AG04449 (cell line): ENCODE measurements at regions of chr16 and their contacts with region 1.

Region 1: DNA sequence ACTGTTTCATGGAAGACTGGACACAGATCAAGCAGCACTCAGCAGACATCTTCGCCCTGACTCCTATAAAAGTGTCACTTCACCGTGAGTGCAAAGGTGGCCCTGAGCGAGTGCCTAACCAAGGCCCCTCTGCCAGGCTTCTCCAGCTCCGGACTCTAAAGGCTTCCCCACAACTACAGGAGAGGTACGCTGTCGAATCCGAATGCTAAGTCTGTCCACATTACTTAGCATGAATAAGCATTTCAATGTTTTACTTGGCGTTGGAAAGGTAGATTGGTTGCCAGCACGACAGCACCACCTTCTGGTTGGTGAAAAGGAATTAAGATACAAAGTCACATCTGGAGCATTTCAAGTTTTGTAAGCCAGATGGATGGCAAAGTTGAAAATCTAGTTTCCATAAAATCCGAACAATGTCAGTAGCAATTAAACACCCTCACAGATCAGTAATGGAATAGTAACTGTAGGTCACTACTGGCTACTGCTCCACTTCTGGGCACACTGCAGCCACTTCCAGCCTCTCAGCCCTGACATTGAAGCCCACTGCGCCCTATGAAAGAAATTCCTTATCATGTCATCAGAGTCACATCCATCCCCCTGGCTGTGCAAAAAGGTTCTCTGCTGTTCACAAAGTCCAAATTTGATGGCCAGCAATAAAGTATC is 100.9 kb downstream of the PARN start:
- DNase-seq: peak; percentile 76
- H3K4me3 ChIP-seq: peak overlapping the region; percentile 32
- CTCF ChIP-seq: peak; percentile 43

Region 2: DNA sequence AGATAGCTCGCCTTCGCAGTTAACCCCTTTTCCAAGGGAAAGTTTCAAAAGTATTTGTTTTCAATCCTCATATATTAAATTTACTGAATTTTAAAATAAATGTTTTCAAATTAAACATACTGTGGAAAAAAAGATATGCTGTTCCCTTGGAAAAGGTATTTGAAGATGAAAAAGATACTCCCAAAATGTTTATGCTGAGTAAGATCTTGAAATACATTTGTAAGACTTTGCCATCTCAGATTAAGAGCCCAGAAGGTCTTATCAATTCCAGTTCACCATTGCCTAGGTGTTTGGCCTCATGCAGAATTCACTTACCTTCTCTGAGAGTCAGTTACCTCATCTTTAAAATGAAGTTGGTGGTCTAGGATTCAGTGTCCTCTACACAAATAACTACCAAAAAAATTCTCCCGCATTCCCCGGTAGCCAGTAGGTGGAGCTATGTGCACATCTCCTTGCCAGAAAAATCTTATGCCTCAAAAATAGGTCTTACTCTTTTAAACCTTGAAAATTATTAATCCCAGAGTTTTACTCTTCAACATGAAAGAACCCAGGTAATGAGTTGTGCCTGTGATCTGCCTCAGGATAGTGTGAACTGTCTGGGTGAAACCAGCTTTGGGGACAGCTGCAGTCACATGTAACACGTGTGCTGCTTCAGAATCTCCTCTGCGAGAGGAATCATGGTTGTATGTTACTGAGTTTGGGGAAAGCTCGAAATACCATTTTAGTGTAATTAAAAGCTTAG is 279.7 kb before region 1 on chr16:
- CTCF ChIA-PET with region 1: interaction called, 48 read pairs
- POLR2A ChIA-PET with region 1: interaction called, 3 read pairs
- DNase-seq: no peak
- H3K4me3 ChIP-seq: no peak overlapping the region
- CTCF ChIP-seq: peak; percentile 71

Region 3: GRCh38 chr16:14300705-14301168 is 228.4 kb before region 1 on chr16:
- CTCF ChIA-PET with region 1: interaction called, 44 read pairs
- POLR2A ChIA-PET with region 1: interaction called, 3 read pairs
- DNase-seq: peak; percentile 45
- H3K4me3 ChIP-seq: peak overlapping the region; percentile 67
- CTCF ChIP-seq: peak; percentile 65

Region 4: GRCh38 chr16:14501331-14502255 is 27.5 kb before region 1 on chr16:
- CTCF ChIA-PET with region 1: interaction called, 13 read pairs
- POLR2A ChIA-PET with region 1: no interaction called
- DNase-seq: peak; percentile 72
- H3K4me3 ChIP-seq: no peak overlapping the region; the same call in 1 of the 2 replicates
- CTCF ChIP-seq: no peak

Region 5: GRCh38 chr16:14539631-14540030 is 10.5 kb after region 1 on chr16:
- CTCF ChIA-PET with region 1: interaction called, 15 read pairs
- POLR2A ChIA-PET with region 1: no interaction called
- DNase-seq: no peak
- H3K4me3 ChIP-seq: no peak overlapping the region
- CTCF ChIP-seq: no peak